CD4-positive, alpha-beta memory T cell (primary cell): ENCODE measurements at regions of chr17 and their contacts with region 1.

Region 1: GRCh38 chr17:81553018-81553615 is 964 bp upstream of the FAAP100 start:
- DNase-seq: peak; percentile 77 to 91 (median 77)
- H3K4me3 ChIP-seq: peak overlapping the region; percentile 81
- H3K4me3 Mint-ChIP-seq: peak overlapping the region; percentile 89 to 93 (median 90)
- H3K27ac ChIP-seq: peak overlapping the region; percentile 64
- H3K27ac Mint-ChIP-seq: peak overlapping the region; percentile 91 to 97 (median 94)
- H3K4me1 ChIP-seq: peaks cover 24% of the 10 kb centered on the region
- H3K4me1 Mint-ChIP-seq: peaks cover 17 to 43% (median 28%) of the 10 kb centered on the region in 4 donors
- H3K27me3 ChIP-seq: no peaks in the 10 kb centered on the region
- H3K27me3 Mint-ChIP-seq: no peaks in the 10 kb centered on the region

Region 2: DNA sequence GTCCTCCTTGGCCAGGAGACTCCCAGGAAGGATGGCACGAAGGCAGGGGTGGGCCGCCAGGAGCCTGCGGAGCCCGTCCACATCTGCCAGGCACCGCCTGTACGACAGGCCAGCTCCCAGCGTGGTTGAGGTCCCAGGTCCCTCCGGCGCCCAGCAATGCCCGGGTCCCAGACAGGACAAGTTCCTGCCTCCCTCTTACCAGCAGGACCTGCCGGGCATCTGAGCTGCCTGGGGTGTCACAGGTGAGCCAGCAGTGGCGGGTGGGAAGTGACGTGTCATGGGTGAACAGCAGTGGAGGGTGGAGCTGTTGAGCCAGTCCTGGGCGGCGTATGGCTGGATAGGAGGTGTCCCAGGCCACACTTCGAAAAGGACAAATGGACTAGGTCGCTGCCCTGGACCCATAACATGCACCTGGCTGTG is 173.6 kb before region 1 on chr17:
- CTCF ChIA-PET with region 1: no interaction called
- POLR2A ChIA-PET with region 1: no interaction called
- intact Hi-C with region 1: no loop called
- DNase-seq: no peak
- H3K4me3 ChIP-seq: no peak overlapping the region
- H3K4me3 Mint-ChIP-seq: no peak overlapping the region
- H3K27ac ChIP-seq: no peak overlapping the region
- H3K27ac Mint-ChIP-seq: no peak overlapping the region
- H3K4me1 ChIP-seq: no peaks in the 10 kb centered on the region
- H3K4me1 Mint-ChIP-seq: no peaks in the 10 kb centered on the region
- H3K27me3 ChIP-seq: no peaks in the 10 kb centered on the region
- H3K27me3 Mint-ChIP-seq: peaks cover 8 to 12% of the 10 kb centered on the region in 2 donors

Region 3: DNA sequence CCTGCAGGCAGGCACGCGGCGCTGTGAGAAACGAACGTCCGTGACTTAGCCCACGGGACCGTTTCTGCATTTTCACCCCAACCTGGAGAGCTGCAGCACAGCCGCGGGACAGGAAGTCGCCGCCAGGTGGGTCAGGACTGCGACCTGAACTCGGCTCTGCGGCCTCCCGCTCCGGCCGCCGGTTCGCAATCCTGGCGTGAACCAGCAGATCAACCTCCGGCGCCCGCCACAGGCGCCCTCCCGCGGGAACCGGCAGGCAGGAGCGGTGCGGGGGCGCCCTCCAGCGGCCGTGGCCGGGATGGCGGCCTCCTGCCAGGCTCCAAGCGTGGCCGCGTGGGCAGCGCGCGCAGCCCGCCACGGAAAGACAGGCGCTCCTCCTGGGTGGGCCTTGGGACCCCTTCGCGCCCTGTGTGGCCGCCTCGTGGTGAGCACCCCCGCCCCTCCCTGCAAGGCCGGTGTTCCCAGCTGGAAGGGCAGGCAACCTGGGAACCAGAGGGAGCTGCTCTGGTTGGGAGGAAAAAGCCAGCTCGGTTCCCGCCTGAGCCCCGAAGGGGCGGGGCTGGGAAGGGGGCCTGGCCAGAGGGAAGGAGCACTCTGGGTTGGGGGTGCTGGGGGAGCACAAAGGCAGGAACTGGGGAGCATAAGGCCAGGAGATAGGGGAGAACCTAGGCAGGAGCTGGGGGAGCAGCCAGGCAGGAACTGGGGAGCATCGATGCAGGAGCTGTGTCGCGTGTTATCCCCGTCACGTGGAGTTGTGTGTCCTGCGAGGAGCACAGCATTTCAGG is 68.7 kb before region 1 on chr17:
- CTCF ChIA-PET with region 1: no interaction called
- POLR2A ChIA-PET with region 1: interaction called, 4 read pairs
- intact Hi-C with region 1: loop called (anchors 2 kb)
- DNase-seq: peak; percentile 76 to 90 (median 85)
- H3K4me3 ChIP-seq: peak overlapping the region in 1 of 2 donors; percentile 48
- H3K4me3 Mint-ChIP-seq: peak overlapping the region in 1 of 8 donors; percentile 45
- H3K27ac ChIP-seq: no peak overlapping the region
- H3K27ac Mint-ChIP-seq: no peak overlapping the region
- H3K4me1 ChIP-seq: peaks cover 30% of the 10 kb centered on the region
- H3K4me1 Mint-ChIP-seq: peaks cover 2 to 24% (median 7%) of the 10 kb centered on the region in 4 donors
- H3K27me3 ChIP-seq: peaks cover 22% of the 10 kb centered on the region
- H3K27me3 Mint-ChIP-seq: peaks cover 11 to 20% of the 10 kb centered on the region in 2 donors

Region 4: GRCh38 chr17:81519284-81519955 is 33.7 kb before region 1 on chr17:
- CTCF ChIA-PET with region 1: interaction called, 10 read pairs
- POLR2A ChIA-PET with region 1: interaction called, 138 read pairs
- intact Hi-C with region 1: loop called (anchors 1 kb)
- DNase-seq: peak; percentile 71 to 81 (median 72)
- H3K4me3 ChIP-seq: peak overlapping the region in 1 of 2 donors; percentile 55
- H3K4me3 Mint-ChIP-seq: peak overlapping the region in 4 of 8 donors; percentile 41 to 72 (median 50)
- H3K27ac ChIP-seq: peak overlapping the region; percentile 43
- H3K27ac Mint-ChIP-seq: no peak overlapping the region
- H3K4me1 ChIP-seq: peaks cover 37% of the 10 kb centered on the region
- H3K4me1 Mint-ChIP-seq: peaks cover 8 to 26% (median 19%) of the 10 kb centered on the region in 4 donors
- H3K27me3 ChIP-seq: no peaks in the 10 kb centered on the region
- H3K27me3 Mint-ChIP-seq: no peaks in the 10 kb centered on the region

Region 5: GRCh38 chr17:81537343-81537855 is 15.7 kb before region 1 on chr17:
- CTCF ChIA-PET with region 1: no interaction called
- POLR2A ChIA-PET with region 1: interaction called, 16 read pairs
- intact Hi-C with region 1: no loop called
- DNase-seq: peak in 1 of 5 donors; percentile 26
- H3K4me3 ChIP-seq: no peak overlapping the region
- H3K4me3 Mint-ChIP-seq: no peak overlapping the region
- H3K27ac ChIP-seq: no peak overlapping the region
- H3K27ac Mint-ChIP-seq: no peak overlapping the region
- H3K4me1 ChIP-seq: peaks cover 7% of the 10 kb centered on the region
- H3K4me1 Mint-ChIP-seq: no peaks in the 10 kb centered on the region
- H3K27me3 ChIP-seq: peaks cover 3% of the 10 kb centered on the region
- H3K27me3 Mint-ChIP-seq: peaks cover 10% of the 10 kb centered on the region in 2 donors

Region 6: DNA sequence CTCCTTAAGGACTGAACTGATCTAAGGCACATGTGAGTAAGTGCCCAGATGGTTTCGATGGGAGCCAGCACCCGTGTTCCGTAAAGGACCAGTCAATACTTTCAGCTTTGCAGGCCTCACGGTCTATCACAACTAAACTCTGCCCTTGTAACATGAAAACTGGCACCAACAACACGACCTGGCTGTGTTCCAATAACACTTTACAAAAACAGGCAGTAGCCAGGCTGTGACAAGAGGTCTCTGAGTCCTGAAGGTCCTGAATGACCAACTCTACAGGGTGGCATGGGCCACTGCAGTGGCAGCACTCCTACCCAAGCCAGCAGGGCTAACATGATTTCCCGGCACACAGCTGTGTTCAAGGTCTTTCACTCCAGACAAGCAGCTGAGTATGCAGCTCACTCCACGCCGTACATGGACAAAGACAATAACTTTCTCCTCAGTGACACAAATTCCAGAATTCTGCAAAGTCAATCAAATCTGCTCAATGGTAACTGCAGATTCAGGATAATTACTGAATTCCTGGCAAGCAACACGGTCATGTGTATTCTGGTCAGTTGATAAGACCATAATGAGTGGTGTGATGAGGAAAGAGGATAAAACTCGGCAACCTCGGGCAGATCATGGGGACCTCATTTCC is 68.5 kb after region 1 on chr17:
- CTCF ChIA-PET with region 1: no interaction called
- POLR2A ChIA-PET with region 1: no interaction called
- intact Hi-C with region 1: no loop called
- DNase-seq: no peak
- H3K4me3 ChIP-seq: no peak overlapping the region
- H3K4me3 Mint-ChIP-seq: no peak overlapping the region
- H3K27ac ChIP-seq: no peak overlapping the region
- H3K27ac Mint-ChIP-seq: no peak overlapping the region
- H3K4me1 ChIP-seq: no peaks in the 10 kb centered on the region
- H3K4me1 Mint-ChIP-seq: peaks cover 0 to 22% (median 12%) of the 10 kb centered on the region in 4 donors
- H3K27me3 ChIP-seq: no peaks in the 10 kb centered on the region
- H3K27me3 Mint-ChIP-seq: no peaks in the 10 kb centered on the region

Region 7: DNA sequence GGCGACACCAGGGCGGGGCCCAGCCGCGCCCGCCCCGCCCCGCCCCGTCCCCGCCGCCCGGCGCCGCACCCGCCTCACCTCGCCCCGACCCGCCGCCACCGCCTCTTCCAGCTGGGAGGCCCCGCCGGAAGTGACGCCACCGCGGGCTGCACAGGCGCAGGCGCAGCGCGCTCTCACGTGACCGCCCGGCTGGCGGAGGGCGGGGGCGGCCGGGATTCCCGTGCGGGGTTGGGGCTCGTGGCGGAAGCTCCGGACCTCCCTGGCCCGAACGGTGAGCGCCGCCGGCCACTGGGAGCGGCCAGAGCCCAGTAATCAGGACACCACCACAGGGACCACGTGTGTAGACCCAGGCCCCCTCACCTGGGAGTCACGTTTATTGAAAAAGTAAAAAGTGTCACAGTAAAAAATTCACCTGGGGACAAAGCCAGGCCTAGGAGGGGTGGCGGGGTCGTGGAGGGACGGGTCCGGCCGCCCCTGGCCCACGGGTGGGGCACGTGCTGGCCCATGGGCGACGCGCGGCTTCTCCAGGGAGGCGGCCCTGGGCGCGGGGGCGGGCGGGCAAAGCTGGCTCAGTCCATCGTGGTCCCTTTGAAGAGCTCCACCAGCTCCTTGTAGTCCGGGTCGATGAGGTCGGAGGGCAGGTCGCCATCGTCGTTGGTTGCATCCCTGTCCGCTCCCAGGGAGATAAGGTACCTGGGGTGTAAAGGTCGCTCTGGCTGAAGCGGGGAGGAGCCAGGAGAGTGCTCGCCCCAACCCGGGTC is 280.2 kb after region 1 on chr17 and contains the start of gene MCRIP1:
- CTCF ChIA-PET with region 1: no interaction called
- POLR2A ChIA-PET with region 1: no interaction called
- intact Hi-C with region 1: loop called (anchors 2 kb)
- DNase-seq: peak; percentile 91 to 93 (median 92)
- H3K4me3 ChIP-seq: peak within 1 kb of the TSS; percentile 56 to 79
- H3K4me3 Mint-ChIP-seq: peak within 1 kb of the TSS; percentile 89 to 97 (median 94)
- H3K27ac ChIP-seq: peak within 1 kb of the TSS; percentile 90
- H3K27ac Mint-ChIP-seq: peak within 1 kb of the TSS; percentile 96 to 98 (median 97)
- H3K4me1 ChIP-seq: peaks cover 23% of the 10 kb centered on the region
- H3K4me1 Mint-ChIP-seq: peaks cover 10 to 31% (median 21%) of the 10 kb centered on the region in 4 donors
- H3K27me3 ChIP-seq: no peaks in the 10 kb centered on the region
- H3K27me3 Mint-ChIP-seq: no peaks in the 10 kb centered on the region
- total RNA-seq, gene MCRIP1: 65.8 to 71.0 TPM